Activated CD4-positive, alpha-beta memory T cell treated with anti-CD3 and anti-CD28 coated beads for 36 hours (primary cell): ENCODE measurements at regions of chr21 and their contacts with region 1.

Region 1: GRCh38 chr21:34351786-34352241 is 12.0 kb upstream of the KCNE2 start:
- DNase-seq: peak; percentile 49
- H3K4me3 Mint-ChIP-seq: no peak overlapping the region
- H3K27ac Mint-ChIP-seq: no peak overlapping the region
- H3K4me1 Mint-ChIP-seq: peaks cover 3% of the 10 kb centered on the region
- H3K27me3 Mint-ChIP-seq: peaks cover 9% of the 10 kb centered on the region

Region 2: GRCh38 chr21:33801424-33802420 is 550.1 kb before region 1 on chr21:
- CTCF ChIA-PET with region 1: no interaction called
- POLR2A ChIA-PET with region 1: no interaction called
- intact Hi-C with region 1: no loop called
- DNase-seq: peak; percentile 11
- H3K4me3 Mint-ChIP-seq: no peak overlapping the region
- H3K27ac Mint-ChIP-seq: no peak overlapping the region
- H3K4me1 Mint-ChIP-seq: no peaks in the 10 kb centered on the region
- H3K27me3 Mint-ChIP-seq: no peaks in the 10 kb centered on the region

Region 3: GRCh38 chr21:33915368-33916199 is 436.2 kb before region 1 on chr21 and contains the start of gene ATP5PO:
- CTCF ChIA-PET with region 1: interaction called, 18 read pairs
- POLR2A ChIA-PET with region 1: interaction called, 6 read pairs
- intact Hi-C with region 1: no loop called
- DNase-seq: peak; percentile 98
- H3K4me3 Mint-ChIP-seq: peak within 1 kb of the TSS; percentile 99
- H3K27ac Mint-ChIP-seq: peak within 1 kb of the TSS; percentile 93
- H3K4me1 Mint-ChIP-seq: peaks cover 28% of the 10 kb centered on the region
- H3K27me3 Mint-ChIP-seq: no peaks in the 10 kb centered on the region
- total RNA-seq, gene ATP5PO: 208 to 210 TPM

Region 4: DNA sequence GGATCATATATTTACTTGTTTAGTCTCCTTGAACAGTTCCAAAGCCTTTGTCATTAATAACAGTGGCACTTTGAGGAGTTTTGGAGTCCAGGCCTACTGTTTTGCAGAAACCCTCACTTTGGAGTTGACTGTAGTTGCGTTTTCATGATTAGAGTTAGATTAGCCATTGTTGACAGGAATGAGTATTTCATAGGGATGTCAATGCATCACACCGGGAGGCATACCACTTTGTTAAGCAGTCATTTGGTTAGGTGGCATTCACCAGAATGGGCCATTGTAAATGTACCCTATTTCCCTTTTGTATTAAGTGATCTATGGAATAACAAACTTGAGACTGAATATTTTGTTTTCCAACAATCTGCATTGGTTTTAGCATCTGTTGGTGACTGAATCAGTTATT is 266.7 kb before region 1 on chr21:
- CTCF ChIA-PET with region 1: interaction called, 13 read pairs
- POLR2A ChIA-PET with region 1: no interaction called
- intact Hi-C with region 1: no loop called
- DNase-seq: no peak
- H3K4me3 Mint-ChIP-seq: no peak overlapping the region
- H3K27ac Mint-ChIP-seq: no peak overlapping the region
- H3K4me1 Mint-ChIP-seq: peaks cover 60% of the 10 kb centered on the region
- H3K27me3 Mint-ChIP-seq: no peaks in the 10 kb centered on the region

Region 5: DNA sequence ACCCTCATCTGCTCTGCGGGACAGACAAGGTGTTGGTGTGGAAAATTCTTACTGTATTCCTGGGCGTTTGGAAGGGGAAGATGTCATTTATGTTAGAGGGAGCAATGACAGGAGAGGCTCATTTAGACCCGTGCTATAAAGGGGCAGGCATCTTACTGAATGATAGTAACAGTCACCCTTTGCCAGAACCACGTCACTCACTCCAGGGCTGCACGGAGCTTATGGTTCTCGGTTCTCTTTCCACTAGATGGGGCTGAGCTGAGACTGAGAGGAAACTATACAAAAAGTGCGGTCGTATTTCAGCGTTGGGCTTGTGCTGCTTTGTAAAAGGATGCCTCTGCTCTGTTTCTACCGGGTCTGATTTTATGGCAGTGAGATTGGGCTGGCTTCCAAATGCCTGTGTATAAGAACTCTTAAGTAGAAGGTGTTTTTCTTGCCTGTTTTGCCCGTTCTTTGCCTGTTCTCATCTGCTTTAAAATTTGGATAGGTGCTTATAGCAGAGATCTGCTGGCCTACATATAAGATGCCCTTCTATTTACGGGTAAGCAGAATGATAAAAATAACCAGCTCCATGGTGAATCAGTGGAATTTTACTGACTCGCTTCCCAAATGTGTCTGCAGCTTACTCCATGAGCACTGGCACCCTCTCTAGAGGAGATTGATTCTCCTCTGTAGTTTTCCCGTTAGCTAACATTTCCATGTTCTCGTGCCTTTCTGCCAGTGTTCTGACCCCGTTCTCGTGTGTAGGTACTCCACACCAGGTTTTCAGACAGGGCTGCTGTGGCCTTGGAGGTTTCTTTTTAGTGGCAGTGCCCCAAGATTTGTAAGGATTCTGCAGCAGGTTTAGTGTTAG is 222.5 kb before region 1 on chr21:
- CTCF ChIA-PET with region 1: interaction called, 20 read pairs
- POLR2A ChIA-PET with region 1: no interaction called
- intact Hi-C with region 1: loop called (anchors 1 kb)
- DNase-seq: peak; percentile 84
- H3K4me3 Mint-ChIP-seq: peak overlapping the region; percentile 59
- H3K27ac Mint-ChIP-seq: peak overlapping the region; percentile 92
- H3K4me1 Mint-ChIP-seq: peaks cover 70% of the 10 kb centered on the region
- H3K27me3 Mint-ChIP-seq: no peaks in the 10 kb centered on the region

Region 6: DNA sequence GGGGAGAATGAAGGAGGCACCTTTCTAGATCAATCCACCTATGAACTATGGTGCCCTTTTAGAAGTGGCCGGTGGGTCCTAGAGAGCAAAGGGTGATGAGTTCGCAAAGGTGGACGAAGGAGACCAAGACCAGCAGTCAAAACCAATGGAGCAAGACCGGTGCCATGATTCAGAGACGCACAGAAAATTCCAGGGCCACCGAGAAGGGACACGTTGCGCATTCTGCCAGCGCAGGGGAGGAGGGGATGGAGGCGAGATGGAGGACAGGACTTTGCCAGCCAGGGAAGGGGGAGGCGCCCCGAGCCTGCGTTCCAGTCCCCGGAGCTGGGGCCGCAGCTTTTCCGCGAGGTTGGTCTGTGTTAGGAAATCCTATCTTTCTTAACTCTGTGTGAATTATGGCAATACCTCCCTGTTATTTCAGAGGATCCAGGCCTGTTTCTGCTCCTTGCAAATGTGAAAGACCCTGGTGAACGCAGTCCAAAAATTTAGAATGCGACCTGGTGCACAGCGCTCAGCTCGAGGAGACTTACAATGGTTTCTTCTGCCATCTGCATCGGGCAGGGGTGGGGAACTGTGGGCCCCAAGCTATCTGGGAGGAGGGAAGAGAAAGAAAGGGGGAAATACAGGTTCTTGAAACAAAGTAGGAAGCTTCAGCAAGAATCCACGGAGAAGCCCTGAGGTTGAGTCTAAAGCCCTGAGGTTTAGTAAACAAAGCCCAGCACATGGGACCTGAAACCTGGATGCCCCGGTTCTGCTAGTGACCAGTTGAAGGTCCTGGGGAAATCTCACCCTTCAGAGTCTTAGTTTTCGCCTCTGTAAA is 149.1 kb before region 1 on chr21:
- CTCF ChIA-PET with region 1: interaction called, 12 read pairs
- POLR2A ChIA-PET with region 1: no interaction called
- intact Hi-C with region 1: no loop called
- DNase-seq: no peak
- H3K4me3 Mint-ChIP-seq: no peak overlapping the region
- H3K27ac Mint-ChIP-seq: no peak overlapping the region
- H3K4me1 Mint-ChIP-seq: peaks cover 25% of the 10 kb centered on the region
- H3K27me3 Mint-ChIP-seq: peaks cover 3% of the 10 kb centered on the region

Region 7: DNA sequence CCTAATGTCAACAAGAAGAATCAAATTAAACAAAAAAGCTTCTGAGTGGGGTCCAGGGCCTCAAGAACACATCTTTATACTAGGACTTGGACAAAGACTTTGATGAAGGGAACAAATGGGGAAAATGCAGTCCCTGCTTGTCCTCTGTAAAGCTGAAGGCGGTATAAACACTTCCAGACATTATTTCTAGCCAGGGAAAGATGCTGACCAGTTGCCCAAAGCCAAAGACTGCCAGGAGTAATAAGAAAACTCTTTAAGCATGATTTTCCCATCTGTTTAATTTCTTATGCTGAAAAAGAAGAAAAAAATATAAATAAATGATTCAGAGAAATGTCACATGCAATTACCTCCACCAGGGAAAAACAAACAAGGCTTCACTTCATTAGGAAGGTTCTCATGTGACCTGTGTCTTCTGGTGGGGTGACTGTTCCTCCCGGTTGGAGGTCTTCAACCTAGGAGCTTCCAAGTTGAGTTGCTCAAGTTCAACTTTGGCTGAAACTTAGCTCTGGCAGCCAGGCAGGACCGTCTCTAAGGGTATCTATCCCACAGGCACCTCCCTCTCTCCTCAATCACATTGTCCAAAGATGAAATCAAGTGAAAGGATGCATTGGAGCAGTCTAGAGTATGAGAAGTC is 53.2 kb before region 1 on chr21:
- CTCF ChIA-PET with region 1: no interaction called
- POLR2A ChIA-PET with region 1: no interaction called
- intact Hi-C with region 1: no loop called
- DNase-seq: no peak
- H3K4me3 Mint-ChIP-seq: no peak overlapping the region
- H3K27ac Mint-ChIP-seq: no peak overlapping the region
- H3K4me1 Mint-ChIP-seq: no peaks in the 10 kb centered on the region
- H3K27me3 Mint-ChIP-seq: no peaks in the 10 kb centered on the region

Region 8: GRCh38 chr21:34362136-34362444 is 10.3 kb after region 1 on chr21:
- CTCF ChIA-PET with region 1: interaction called, 11 read pairs
- POLR2A ChIA-PET with region 1: no interaction called
- intact Hi-C with region 1: no loop called
- DNase-seq: no peak
- H3K4me3 Mint-ChIP-seq: no peak overlapping the region
- H3K27ac Mint-ChIP-seq: no peak overlapping the region
- H3K4me1 Mint-ChIP-seq: peaks cover 5% of the 10 kb centered on the region
- H3K27me3 Mint-ChIP-seq: peaks cover 9% of the 10 kb centered on the region